ENCODE measurements at regions of chr3 and their contacts with region 1.

Region 1: DNA sequence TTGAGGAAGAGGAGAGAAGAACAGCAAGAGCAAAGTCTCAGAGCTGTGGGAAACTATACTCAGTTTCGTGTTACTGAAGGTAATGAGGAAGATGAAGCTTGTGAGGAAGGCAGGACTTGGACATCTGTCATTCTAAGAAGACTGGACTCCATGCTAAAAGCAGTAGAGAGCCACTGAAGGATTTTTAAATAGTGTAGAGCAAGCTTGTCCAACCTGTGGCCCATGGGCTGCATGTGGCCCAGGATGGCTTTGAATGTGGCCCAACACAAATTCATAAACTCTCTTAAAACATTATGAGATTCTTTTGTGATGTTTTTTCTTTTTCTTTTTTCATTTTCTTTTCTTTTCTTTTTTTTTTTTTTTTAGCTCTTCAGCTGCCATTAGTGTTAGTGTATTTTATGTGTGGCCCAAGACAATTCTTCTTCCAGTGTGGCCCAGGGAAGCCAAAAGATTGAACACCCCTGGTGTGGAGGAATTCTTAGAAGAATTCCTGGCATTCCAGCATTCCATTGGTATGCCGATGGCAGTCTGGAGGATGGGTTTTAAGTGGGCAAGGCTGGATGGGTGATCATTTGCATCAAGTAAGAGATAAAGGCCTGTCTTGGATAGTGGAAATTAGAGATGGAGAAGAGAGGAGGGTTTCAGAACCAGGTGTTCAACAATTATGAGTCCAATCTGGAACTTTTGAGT is 6.9 kb upstream of the NFKBIZ start:
- DNase-seq: no peak
- CTCF ChIP-seq: no peak

Region 2: DNA sequence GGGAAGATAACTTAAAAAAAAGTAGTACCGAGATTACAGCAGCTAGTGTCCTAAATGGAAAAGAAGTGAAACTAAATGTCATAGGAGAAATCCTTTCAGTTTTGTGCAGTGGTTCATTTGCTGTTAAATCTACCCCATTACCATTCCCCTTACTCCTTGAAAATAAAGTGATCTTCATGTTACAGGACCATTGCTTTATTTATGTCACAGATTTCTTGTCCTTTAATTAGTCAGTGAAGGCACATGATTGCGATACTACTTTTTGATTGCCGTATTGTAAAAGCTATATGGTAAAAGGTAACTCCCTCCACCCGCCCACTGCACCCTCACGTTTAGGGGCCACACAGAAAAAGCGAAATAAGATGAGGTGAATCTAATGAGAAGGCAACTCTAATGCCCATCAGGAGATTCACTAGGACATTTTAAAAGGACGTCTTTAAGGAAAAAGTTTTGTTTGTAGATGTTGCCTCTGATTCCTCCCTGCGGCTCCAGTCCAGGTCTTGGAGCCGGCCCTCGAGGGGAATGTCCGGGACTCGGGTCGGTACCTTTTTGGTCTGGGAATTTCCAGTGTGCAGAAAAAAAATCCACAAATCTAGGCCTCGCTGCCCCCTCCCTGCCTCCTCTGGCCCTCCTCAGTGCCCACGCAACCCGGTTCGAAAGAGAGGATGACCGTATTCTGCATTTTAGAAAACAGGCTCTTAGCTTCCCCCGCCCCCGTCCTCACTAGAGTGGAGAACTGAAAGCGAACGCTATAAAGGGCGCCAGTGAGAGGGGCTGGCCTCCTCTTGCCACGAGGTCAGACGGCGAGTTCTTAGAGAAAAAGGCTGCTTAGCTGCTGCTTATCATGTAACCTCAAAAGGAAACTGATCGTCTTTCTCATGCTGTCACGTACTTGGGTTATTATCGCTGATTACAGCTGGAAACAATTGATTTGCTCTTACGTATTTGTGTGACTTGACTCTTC is 14.9 kb before region 1 on chr3:
- CTCF ChIA-PET with region 1: interaction called, 14 read pairs
- POLR2A ChIA-PET with region 1: interaction called, 54 read pairs
- DNase-seq: peak; percentile 80
- CTCF ChIP-seq: no peak

Region 3: GRCh38 chr3:101936419-101937356 is 94.3 kb after region 1 on chr3:
- CTCF ChIA-PET with region 1: no interaction called
- POLR2A ChIA-PET with region 1: no interaction called
- DNase-seq: peak; percentile 81
- CTCF ChIP-seq: no peak

Measured in GM10248 (cell line).